Head of caudate nucleus (tissue), 42 donors: ENCODE measurements at regions of chr17 and their contacts with region 1.

Region 1: GRCh38 chr17:82320956-82321927 is 3.8 kb upstream of the CD7 start:
- DNase-seq: peak in 18 of 42 donors; percentile 10 to 67 (median 46)

Region 2: GRCh38 chr17:82129095-82129494 is 192.1 kb before region 1 on chr17:
- intact Hi-C with region 1: no loop called
- DNase-seq: no peak

Region 3: DNA sequence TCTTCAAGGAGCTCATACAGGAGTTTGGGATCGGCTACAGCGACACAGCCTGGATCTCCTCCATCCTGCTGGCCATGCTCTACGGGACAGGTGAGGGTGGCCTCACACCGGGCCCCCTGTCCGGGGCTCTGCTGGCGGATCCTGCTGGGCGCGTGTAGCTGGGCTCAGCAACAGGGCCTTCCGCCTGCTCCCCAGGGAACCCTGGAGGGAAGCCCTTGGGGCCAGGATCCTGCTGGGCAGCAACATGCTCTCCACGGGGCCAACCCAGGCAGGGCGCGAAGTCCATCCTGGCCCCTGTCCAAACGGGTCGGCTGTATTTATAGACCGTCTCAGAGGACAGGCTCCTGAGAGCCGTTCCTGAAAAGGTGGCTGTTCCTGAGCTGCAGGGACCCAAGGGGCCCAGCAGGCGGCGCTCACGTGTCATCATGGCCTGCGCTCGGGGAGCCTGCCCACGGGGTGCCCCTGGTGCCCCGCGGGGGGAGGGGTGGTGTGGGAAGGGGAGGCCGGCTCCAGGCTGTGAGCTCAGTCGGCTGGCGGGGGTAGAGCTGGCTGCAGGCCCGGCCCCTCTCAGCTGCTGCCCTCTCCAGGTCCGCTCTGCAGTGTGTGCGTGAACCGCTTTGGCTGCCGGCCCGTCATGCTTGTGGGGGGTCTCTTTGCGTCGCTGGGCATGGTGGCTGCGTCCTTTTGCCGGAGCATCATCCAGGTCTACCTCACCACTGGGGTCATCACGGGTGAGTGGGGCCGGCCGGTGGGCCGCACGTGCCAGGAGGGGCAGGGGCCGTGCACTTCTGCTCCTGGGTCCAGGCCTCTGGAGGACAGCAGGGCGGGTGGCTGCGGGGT is 84.9 kb before region 1 on chr17:
- intact Hi-C with region 1: loop called (anchors 5 kb)
- DNase-seq: peak; percentile 55 to 91 (median 80)